Activated T-helper 1 cell treated with anti-CD3 and anti-CD28 coated beads, Interleukin-12 subunit alpha, Interleukin-12 subunit beta, Interleukin-2, Interleukin-4 antibody, amounts not matched to agents 30 ng/mL and 10 ng/mL and 1 ng/mL, durations not matched to agents 14 hours and 24 hours and 36 hours (primary cell): ENCODE measurements at regions of chr19 and their contacts with region 1.

Region 1: DNA sequence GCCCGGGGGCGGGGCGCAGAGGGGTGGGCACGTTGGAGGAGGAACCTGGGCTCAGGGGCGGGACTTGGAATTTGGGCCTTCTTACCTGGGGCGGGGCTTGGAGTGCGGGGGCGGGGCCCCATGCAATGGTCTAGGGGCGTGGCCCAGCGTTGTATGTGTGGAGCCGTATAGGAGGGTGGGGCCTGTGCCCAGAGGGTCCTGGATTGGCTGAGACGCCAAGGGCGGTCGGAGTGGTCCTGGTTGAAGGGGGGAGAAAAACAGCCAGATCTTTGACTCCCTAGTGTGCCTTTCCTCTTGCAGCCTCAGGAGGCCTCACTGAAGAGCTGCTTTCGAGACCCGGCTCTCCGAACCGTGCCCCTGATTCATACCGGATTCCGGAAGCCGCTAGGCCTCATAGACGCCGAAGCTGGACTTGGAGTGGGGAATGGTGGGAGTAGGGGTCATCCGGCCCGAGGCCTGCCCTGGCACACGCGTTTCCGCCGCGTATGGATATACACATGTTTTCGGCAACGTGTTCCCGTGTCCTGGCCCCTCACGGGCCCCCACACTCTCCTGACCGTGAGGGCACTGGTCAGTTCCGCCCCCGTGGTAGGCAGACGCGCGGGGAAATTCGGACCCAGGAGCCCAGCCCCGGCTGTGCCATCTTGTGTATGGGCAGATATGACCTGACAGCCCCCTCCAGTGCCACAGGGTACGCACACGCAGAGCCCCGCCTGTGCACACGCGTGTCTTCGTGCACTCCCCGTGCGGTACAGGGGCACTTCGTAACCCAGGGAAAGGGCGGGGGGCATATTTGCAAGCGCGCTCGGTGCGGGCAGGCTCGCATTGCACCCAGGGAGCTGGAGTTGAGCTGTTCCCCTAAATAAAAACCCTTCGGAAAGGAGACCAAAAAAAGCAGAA is 661 bp upstream of the PRR12 start:
- DNase-seq: peak; percentile 93
- H3K4me3 Mint-ChIP-seq: peak overlapping the region; percentile 88
- H3K27ac Mint-ChIP-seq: peak overlapping the region; percentile 84
- H3K4me1 Mint-ChIP-seq: peaks cover 40% of the 10 kb centered on the region
- H3K27me3 Mint-ChIP-seq: peaks cover 10% of the 10 kb centered on the region

Region 2: GRCh38 chr19:49443366-49444099 is 146.8 kb before region 1 on chr19:
- intact Hi-C with region 1: no loop called
- DNase-seq: peak; percentile 90
- H3K4me3 Mint-ChIP-seq: peak overlapping the region; percentile 82
- H3K27ac Mint-ChIP-seq: peak overlapping the region; percentile 88
- H3K4me1 Mint-ChIP-seq: peaks cover 42% of the 10 kb centered on the region
- H3K27me3 Mint-ChIP-seq: peaks cover 37% of the 10 kb centered on the region

Region 3: DNA sequence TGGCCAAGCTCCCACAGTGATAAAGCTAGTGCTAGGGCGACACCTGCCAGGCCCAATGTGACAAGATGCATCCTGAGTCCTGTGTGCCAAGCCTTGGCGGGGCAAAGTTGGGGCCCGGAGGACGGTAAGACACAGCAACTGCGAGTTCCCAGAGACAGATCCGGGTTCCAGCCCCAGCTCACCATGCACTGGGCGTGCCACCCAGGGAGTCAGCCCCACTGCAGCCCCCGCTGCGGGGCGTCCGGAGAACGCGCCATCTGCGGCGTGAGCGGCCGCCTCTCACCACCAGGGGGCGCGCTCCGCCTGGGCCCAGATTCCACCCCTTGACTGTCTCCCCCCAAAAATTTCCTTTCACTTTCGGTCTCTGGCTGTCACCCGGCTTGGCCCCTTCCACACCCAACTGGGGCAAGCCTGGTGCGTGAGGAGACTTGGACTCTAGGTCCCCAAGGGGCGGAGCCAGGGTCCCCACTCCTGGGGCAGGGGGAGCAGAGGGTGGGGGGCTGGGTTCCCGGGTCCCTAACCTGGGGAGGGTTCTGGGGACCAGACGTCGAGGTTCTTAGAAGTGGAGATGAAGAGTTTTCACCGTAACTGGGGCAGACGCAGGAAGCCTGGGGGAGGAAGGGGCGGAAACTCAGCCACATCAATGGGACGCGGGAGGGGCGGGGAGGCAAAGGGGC is 116.3 kb before region 1 on chr19 and contains the start of gene FLT3LG:
- intact Hi-C with region 1: no loop called
- DNase-seq: peak; percentile 94
- H3K4me3 Mint-ChIP-seq: peak within 1 kb of the TSS; percentile 91
- H3K27ac Mint-ChIP-seq: peak within 1 kb of the TSS; percentile 97
- H3K4me1 Mint-ChIP-seq: peaks cover 45% of the 10 kb centered on the region
- H3K27me3 Mint-ChIP-seq: no peaks in the 10 kb centered on the region
- total RNA-seq, gene FLT3LG: 58.4 and 65.4 TPM in 2 replicates

Region 4: GRCh38 chr19:49555600-49556411 is 34.5 kb before region 1 on chr19:
- intact Hi-C with region 1: no loop called
- DNase-seq: peak; percentile 73
- H3K4me3 Mint-ChIP-seq: peak overlapping the region; percentile 15
- H3K27ac Mint-ChIP-seq: peak overlapping the region; percentile 89
- H3K4me1 Mint-ChIP-seq: peaks cover 65% of the 10 kb centered on the region
- H3K27me3 Mint-ChIP-seq: no peaks in the 10 kb centered on the region

Region 5: GRCh38 chr19:49651029-49651825 is 60.9 kb after region 1 on chr19:
- intact Hi-C with region 1: no loop called
- DNase-seq: no peak
- H3K4me3 Mint-ChIP-seq: no peak overlapping the region
- H3K27ac Mint-ChIP-seq: no peak overlapping the region
- H3K4me1 Mint-ChIP-seq: no peaks in the 10 kb centered on the region
- H3K27me3 Mint-ChIP-seq: no peaks in the 10 kb centered on the region

Region 6: DNA sequence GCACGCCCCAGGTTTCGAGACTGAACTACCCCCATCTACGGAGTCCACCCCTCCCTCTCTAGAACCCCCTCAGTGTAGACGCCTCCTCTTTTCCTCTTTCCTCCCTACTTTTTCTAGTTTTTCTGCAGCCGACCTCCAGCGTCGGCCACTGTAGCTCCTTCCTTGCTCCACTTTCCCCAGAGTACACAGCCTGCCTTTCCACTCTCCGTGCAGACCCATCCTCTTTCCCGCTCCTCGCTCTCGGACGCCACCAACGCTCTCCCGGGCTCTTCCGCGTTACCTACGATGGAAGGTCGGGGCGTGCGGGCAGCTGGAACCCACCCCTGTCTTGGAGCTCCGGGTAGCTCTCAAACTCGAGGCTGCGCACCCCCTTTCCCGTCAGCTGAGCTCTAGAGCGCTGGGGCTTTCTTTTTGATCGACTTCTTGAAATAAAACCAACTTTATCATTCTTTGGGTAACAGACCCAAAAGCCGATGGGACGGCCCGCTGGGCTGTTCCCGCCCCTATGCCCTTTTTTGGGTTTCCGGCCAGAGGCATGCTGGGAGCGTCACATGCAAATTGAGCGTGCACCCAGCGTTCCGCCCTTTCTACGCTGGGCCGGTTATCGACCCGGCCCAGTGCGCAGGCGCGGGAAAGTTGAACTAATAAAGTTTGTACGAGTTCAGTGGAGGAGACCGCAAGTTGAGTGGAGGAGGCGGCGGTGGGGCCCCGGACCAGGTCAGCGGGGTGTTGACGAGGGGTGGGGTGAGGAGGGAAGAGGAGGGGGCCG is 75.2 kb after region 1 on chr19 and contains the starts of genes BCL2L12 and IRF3:
- intact Hi-C with region 1: loop called (anchors 1 kb)
- DNase-seq: peak; percentile 98
- H3K4me3 Mint-ChIP-seq: peak within 1 kb of the TSS; percentile 98
- H3K27ac Mint-ChIP-seq: peak within 1 kb of the TSS; percentile 93
- H3K4me1 Mint-ChIP-seq: peaks cover 32% of the 10 kb centered on the region
- H3K27me3 Mint-ChIP-seq: no peaks in the 10 kb centered on the region
- total RNA-seq, gene BCL2L12: 72.2 and 73.7 TPM in 2 replicates
- total RNA-seq, gene IRF3: 149 and 156 TPM in 2 replicates